Gastrocnemius medialis (tissue), 4 donors: ENCODE measurements at regions of chr16 and their contacts with region 1.

Region 1: DNA sequence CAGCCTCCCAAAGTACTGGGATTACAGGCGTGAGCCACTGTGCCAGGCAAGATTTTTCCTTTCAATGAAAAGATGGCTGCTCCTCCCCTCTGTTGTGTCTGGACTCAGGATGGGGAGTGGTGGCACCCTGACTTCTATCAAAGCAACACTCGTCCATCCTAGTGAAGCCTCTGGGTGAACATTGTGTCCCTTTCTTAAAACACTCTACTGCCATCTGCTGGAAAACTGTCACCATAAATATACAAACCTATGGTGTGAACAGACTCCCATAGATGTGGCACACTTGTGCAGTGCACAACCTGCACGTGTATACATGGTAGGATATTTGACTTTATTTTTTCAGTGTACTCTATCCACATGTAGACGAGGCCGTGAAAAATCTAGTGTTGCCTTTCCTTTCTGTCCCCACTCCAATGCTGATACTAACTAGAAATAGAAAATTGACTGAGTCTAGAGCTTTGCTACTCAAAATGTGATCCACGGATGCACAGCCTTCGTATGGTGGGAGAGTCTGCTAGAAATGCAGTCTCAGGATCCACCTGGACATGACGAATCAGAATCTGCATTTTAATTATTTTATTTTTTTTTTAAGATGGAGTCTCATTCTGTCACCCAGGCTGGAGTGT is 55.9 kb upstream of the PLCG2 start:
- DNase-seq: no peak
- ATAC-seq: peak; percentile 83 to 87
- H3K4me3 ChIP-seq: no peak overlapping the region
- H3K27ac ChIP-seq: no peak overlapping the region
- H3K4me1 ChIP-seq: no peaks in the 10 kb centered on the region
- H3K27me3 ChIP-seq: no peaks in the 10 kb centered on the region
- CTCF ChIP-seq: peak; percentile 44 to 68 (median 62)
- POLR2A ChIP-seq: no peak

Region 2: DNA sequence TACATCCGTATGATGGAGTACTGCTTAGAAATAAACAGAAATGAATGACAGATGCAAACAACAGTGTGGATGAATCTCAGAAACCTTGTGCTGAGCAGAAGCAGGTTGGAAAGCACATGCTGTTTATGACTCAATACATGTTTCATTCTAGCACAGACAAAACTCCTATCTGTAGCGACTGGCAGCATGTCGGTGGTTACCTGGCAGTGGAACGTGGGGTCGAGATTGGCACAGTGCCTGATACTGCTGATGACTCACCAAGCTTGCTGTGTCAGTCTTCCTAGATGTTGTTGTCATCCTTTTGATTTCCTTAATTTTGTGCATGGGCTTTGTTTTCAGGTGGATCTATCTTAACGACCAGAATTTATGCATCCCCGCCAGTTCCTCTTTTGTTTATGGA is 346.3 kb before region 1 on chr16:
- in situ Hi-C with region 1: no loop called
- intact Hi-C with region 1: no loop called
- DNase-seq: no peak
- ATAC-seq: no peak
- H3K4me3 ChIP-seq: no peak overlapping the region
- H3K27ac ChIP-seq: no peak overlapping the region
- H3K4me1 ChIP-seq: no peaks in the 10 kb centered on the region
- H3K27me3 ChIP-seq: no peaks in the 10 kb centered on the region
- CTCF ChIP-seq: no peak
- POLR2A ChIP-seq: no peak

Region 3: GRCh38 chr16:81394966-81395651 is 328.1 kb before region 1 on chr16:
- in situ Hi-C with region 1: loop called (anchors 5 to 10 kb)
- intact Hi-C with region 1: no loop called
- DNase-seq: no peak
- ATAC-seq: peak; percentile 30 to 33
- H3K4me3 ChIP-seq: no peak overlapping the region
- H3K27ac ChIP-seq: peak overlapping the region in 3 of 4 donors; percentile 31 to 47 (median 31)
- H3K4me1 ChIP-seq: peaks cover 0 to 6% of the 10 kb centered on the region in 2 donors
- H3K27me3 ChIP-seq: no peaks in the 10 kb centered on the region
- CTCF ChIP-seq: no peak
- POLR2A ChIP-seq: no peak

Region 4: DNA sequence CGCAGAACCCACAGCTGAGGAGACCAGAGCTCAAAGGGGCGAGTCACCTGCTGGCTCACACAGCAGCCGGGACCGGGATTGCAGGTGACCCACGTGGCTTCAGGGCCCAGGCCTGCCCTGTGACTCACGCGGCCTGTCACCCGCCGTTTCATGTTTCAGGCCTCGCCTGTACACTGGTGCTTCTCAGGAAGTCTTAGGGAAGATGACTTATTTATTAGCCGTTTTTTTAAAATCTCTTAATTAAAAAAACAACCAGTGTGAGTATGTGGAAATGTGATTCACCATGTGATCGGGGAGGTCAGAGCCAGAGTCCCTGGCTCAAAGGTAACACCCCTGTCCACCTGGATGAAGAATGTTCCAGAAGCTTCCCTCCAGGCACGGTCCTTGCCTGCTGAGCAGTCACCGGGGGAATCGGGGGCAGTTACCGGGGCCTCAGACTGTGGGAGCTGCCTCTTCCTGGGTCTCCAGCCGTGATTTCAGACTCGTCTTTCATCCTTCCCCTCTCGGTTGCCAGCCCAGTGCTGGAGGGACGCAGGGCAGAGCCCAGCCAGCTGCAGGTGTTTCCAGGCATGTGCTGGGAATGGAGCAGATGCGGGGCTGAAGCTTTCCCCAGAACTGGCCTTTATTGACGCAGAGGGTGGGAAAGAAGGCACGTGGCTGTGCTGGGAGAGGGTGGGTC is 229.3 kb before region 1 on chr16:
- in situ Hi-C with region 1: no loop called
- intact Hi-C with region 1: no loop called
- DNase-seq: no peak
- ATAC-seq: peak; percentile 14 to 46
- H3K4me3 ChIP-seq: no peak overlapping the region
- H3K27ac ChIP-seq: peak overlapping the region; percentile 33 to 65 (median 48)
- H3K4me1 ChIP-seq: peaks cover 0 to 3% of the 10 kb centered on the region in 2 donors
- H3K27me3 ChIP-seq: no peaks in the 10 kb centered on the region
- CTCF ChIP-seq: no peak
- POLR2A ChIP-seq: no peak

Region 5: DNA sequence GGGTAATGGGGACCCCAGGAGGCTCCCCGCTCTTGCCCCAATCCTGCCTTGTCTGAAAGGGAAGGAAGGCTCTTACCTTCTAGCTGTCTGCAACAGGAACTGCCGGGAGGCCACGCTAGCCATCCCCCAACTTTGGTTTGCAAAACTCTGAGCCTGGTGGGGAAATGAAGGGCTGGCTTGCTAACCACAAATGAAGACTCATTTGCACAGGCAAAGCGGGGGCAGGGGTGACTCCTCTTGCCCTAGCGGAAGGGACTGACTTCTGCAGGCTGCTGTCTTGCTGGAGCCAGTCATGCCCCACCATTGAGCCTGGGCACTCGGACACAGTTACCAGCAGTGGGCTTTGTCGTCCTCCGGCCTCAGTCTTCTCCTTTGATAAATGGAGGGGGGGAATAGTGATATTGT is 108.5 kb after region 1 on chr16:
- in situ Hi-C with region 1: no loop called
- intact Hi-C with region 1: no loop called
- DNase-seq: peak; percentile 13 to 38
- ATAC-seq: no peak
- H3K4me3 ChIP-seq: no peak overlapping the region
- H3K27ac ChIP-seq: no peak overlapping the region
- H3K4me1 ChIP-seq: no peaks in the 10 kb centered on the region
- H3K27me3 ChIP-seq: no peaks in the 10 kb centered on the region
- CTCF ChIP-seq: no peak
- POLR2A ChIP-seq: no peak